ENCODE measurements at regions of chr15 and their contacts with region 1.

Region 1: GRCh38 chr15:67945951-67946700 is 106.3 kb upstream of the RNU6-1 start:
- DNase-seq: no peak
- ATAC-seq: peak; percentile 32

Region 2: GRCh38 chr15:67746022-67746421 is 200.1 kb before region 1 on chr15:
- intact Hi-C with region 1: no loop called
- DNase-seq: no peak
- ATAC-seq: peak; percentile 37

Region 3: DNA sequence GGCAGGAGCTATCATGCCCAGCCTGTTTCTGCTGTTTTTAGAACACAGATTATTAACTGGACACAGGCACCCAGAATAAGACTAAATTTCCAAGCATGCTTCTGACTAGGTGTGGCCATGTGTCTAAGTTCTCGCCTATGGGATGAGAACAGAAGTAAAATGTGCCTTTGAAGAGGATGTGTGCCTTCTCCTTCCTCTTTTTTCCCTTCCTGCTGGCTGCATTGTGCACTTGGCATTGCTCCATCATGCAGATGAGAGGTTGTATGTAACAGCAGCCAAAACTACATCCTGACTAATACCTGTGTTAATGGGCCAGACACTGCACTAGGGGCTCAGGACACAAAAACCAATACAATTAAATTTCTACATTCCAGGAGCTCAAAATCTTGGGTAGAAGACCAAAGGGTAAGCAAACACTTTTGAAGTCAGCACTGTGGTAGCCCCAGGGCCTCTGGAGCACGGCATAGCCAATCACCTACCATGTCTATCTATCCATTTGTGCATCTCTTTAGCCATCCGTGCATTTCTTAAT is 65.4 kb before region 1 on chr15:
- intact Hi-C with region 1: no loop called
- DNase-seq: peak; percentile 79
- ATAC-seq: no peak

Region 4: DNA sequence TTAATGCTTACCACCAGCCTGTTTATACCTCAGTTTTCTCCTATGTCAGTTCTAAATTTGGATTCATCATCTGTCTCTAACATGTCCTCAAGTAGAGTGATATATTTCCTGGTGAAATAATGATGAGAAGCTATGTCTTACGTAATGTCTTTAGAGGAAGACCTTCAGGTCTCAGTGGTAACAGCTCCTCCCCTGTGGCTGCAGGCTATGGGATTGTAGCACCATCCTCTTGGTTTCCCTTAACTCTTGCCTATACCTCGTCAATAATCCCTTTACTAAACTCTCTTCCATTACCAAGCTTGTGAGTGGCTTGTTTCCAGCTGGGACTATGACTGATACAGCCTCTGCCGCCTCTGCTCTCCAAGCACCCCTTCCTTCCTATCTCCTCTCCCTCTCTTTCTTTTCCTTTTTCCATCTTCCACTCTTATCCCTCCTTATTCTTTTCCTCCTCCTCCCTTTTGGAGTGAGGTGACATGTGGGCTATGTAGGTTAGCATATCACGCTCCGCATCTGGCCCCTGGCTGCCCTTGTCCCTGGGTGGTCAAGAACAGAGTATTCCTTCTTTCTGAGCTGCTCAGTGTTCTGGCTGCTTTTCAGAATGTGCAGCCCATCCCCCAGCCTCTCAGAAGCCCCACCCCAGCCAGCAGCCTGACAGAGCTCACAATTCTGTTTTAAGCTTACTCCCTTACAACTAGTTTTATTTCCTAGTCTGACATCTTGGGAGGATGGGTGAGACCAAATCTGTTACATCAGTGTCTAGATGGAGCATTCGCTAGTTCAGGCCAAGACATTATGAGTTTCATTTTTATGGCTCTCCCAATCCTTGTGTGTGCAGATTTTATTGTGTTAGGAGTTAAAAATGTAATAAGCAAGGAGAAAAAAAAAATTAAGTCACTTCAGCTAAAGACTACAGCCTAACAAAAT is 31.3 kb before region 1 on chr15:
- intact Hi-C with region 1: loop called (anchors 2 kb)
- DNase-seq: peak; percentile 84
- ATAC-seq: peak; percentile 83

Region 5: DNA sequence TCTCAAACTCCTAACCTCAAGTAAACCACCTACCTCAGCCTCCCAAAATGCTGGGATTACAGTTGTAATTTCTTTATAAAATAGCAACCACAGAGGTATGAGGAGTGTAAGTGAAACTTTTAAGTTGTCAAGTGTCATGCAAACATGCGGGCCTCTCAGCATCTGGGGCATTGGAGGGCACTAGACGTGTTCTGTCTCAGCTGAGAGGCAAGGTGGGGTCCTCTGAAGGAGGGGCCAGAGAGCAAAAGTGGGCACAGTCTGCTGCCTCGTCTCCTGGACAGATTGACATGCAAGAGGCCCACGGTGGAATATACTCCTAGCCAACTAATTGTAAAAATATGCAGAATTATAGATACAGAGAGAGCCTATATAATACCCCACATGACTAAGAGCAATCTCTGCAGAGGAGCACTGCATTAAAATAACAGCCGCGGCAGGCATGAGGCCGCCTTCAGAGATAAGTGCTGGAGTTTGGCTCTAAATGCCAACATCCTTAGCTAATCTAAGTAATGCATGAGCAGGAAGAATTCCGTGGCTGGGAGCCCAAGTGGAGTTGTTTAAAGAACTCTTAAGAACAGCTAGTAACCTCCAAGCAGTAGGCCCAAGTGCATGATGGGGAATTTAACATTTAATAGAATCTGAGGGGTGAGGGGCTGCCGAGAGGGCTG is 18.5 kb before region 1 on chr15:
- intact Hi-C with region 1: loop called (anchors 2 kb)
- DNase-seq: peak; percentile 77
- ATAC-seq: peak; percentile 70